Sigmoid colon (tissue), 7 donors: ENCODE measurements at regions of chr14 and their contacts with region 1.

Region 1: DNA sequence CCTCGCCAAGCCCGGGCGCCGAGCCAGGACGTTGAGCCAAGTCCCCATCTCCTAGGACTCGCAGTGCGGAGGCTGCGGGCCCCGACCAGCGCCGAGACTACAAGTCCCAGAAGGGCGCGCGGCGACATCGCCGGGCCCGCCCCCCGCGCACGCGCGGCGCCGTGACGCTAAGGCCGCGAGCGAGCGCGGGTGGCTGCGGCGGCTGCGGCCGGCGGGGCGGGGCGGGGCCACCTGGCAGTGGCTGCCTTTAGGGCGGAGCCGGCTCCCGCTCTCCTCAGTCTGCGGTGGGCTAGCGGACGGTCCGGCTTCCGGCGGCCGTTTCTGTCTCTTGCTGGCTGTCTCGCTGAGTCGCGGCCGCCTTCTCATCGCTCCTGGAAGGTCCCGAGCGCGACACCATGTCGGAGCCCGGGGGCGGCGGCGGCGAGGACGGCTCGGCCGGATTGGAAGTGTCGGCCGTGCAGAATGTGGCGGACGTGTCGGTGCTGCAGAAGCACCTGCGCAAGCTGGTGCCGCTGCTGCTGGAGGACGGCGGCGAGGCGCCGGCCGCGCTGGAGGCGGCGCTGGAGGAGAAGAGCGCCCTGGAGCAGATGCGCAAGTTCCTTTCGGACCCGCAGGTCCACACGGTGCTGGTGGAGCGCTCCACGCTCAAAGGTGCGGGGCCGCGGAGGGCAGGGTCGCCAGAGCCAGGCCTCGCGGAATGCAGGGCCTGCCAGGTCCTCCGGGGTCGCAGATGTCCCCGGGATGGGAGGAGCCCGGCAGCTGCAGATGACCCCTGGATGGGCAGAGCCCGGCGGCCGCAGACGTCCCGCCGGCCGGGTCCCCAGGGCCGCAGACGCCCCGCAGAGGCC is at the start of gene DYNC1H1:
- DNase-seq: peak; percentile 99
- H3K4me3 ChIP-seq: peak within 1 kb of the TSS; percentile 89 to 100 (median 92)
- H3K27ac ChIP-seq: peak within 1 kb of the TSS; percentile 88 to 100 (median 96)
- H3K4me1 ChIP-seq: peaks cover 0 to 62% (median 43%) of the 10 kb centered on the region in 4 donors
- H3K27me3 ChIP-seq: no peaks in the 10 kb centered on the region
- CTCF ChIP-seq: no peak
- EP300 ChIP-seq: no peak
- POLR2A ChIP-seq: peak; percentile 95 to 96
- total RNA-seq, gene DYNC1H1: 320 to 592 (median 485) TPM

Region 2: DNA sequence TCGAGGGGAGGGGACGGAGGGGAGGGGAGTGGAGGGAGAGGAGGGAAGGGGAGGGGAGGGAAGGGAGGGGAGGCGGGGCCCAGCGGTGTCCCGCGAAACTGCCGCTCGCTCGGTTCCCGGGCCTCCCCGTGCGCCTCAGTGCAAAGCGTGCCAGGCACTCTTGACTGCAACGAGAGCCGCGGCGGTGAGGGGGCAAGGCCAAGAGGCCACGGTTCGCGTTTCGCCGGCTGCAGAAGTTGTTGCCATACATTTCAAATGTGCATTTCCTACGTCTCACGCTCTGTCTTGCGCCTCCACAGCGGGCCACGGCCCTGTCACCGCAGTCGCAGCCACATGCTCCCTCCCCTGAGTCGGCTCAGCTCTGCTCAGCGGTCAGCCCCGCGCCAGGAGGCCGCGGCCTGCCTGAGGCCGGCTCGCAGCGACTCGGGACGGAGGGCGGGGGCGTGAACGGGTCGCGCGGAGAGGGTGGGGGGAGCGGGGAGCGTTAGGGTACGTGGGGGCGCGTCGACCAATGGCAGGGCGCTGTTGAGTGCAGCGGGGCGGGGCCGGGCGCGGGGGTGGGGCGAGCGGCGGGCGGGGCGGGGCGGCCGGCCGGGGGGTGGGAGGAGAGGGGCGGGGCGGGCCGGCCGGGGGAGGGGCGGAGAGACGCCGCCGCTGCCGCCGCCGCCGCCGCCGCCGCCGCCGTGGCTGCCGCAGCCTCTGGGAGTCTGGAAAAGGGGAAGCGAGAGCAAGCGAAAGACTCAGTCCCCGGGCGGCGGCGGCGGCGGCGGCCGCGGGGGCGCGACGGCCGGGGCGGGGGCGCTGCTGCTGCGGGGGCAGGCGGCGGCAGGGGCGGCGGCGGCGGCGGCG is 203.3 kb before region 1 on chr14 and contains the start of gene PPP2R5C:
- intact Hi-C with region 1: loop called (anchors 2 kb)
- DNase-seq: peak; percentile 97
- H3K4me3 ChIP-seq: peak within 1 kb of the TSS; percentile 65 to 98 (median 82)
- H3K27ac ChIP-seq: peak within 1 kb of the TSS; percentile 89 to 98 (median 95)
- H3K4me1 ChIP-seq: peaks cover 0 to 22% (median 19%) of the 10 kb centered on the region in 4 donors
- H3K27me3 ChIP-seq: no peaks in the 10 kb centered on the region
- CTCF ChIP-seq: no peak
- EP300 ChIP-seq: no peak
- POLR2A ChIP-seq: peak; percentile 72 to 91
- total RNA-seq, gene PPP2R5C: 115 to 175 (median 147) TPM

Region 3: GRCh38 chr14:101947906-101948665 is 16.4 kb before region 1 on chr14:
- intact Hi-C with region 1: loop called (anchors 1 kb)
- DNase-seq: peak; percentile 100
- H3K4me3 ChIP-seq: peak overlapping the region; percentile 63 to 88 (median 82)
- H3K27ac ChIP-seq: peak overlapping the region; percentile 94 to 99 (median 97)
- H3K4me1 ChIP-seq: peaks cover 0 to 24% (median 16%) of the 10 kb centered on the region in 4 donors
- H3K27me3 ChIP-seq: no peaks in the 10 kb centered on the region
- CTCF ChIP-seq: no peak
- EP300 ChIP-seq: peak in 2 of 4 donors; percentile 84 to 94
- POLR2A ChIP-seq: peak; percentile 95 to 96

Region 4: DNA sequence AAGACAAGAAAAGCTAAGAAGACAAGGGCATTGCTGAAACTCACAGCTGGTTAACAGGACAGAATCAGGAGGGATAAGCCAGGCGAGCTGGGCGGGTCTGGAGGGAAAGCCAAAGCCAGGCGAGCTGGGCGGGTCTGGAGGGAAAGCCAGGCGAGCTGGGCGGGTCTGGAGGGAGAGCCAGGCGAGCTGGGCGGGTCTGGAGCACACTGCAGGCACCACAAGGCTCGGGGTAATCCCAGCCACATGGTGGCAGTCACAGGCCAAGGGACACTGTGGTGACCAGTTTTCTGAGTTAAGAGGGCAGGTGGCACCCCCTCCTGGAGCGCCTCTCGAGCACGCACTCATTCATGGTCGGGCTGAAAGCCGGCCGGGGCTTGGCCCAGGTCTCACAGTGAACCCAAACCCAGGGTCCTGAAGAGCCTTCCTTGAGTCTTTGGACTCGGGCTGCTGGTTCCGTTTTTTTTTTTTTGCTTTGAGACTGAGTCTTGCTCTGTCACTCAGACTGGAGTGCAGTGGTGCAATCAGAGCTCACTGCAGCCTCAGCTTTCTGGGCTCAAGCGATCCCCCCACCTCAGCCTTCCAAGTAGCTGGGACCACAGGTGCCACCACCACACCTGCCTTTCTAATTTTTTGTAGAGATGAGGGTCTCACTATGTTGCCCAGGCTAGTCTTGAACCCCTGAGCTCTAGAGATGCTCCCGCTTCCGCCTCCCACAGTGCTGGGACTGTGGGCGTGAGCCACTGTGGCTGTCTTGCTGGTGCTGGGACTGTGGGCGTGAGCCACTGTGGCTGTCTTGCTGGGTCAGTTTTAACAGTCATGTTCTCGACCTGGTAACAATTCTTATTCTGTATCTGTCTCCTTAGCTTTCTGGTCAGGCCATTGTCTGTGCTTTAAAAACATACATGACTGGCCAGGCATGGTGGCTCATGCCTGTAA is 82.1 kb after region 1 on chr14:
- intact Hi-C with region 1: loop called (anchors 5 kb)
- DNase-seq: peak; percentile 93
- H3K4me3 ChIP-seq: no peak overlapping the region
- H3K27ac ChIP-seq: peak overlapping the region; percentile 28 to 67 (median 39)
- H3K4me1 ChIP-seq: peaks cover 0 to 23% (median 11%) of the 10 kb centered on the region in 4 donors
- H3K27me3 ChIP-seq: no peaks in the 10 kb centered on the region
- CTCF ChIP-seq: peak in 3 of 4 experiments; percentile 35 to 50 (median 39)
- EP300 ChIP-seq: no peak
- POLR2A ChIP-seq: no peak

Region 5: DNA sequence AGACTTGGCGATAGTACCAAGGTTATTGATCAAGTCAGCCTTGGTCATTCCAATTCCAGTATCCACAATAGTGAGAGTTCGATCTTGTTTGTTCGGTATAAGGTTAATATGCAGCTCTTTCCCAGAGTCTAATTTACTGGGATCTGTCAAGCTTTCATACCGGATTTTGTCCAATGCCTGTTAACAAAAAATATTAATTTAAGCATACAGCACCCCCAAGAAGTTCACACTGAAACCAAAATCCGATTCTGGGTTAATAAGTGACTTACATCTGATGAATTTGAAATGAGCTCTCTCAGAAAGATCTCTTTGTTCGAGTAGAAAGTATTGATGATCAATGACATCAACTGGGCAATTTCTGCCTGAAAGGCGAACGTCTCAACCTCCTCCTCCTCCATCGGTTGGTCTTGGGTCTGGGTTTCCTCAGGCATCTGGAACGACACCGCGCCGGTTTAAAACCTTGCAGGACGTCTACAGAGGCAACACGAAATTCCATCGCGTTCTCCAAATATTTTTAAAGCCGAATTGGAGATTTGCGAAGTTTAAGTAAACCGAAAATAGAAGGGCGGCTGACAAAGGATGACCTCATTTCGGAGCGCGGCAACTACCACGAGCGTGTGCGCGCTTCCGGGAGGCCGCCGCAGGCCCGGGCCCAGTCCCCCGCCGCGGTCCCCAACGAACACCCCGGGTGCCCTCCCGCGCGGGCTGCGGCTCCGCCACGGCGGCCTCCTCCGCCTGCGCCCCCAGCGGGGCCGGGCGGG is 121.6 kb after region 1 on chr14:
- intact Hi-C with region 1: no loop called
- DNase-seq: peak; percentile 77
- H3K4me3 ChIP-seq: peak overlapping the region; percentile 91 to 99 (median 94)
- H3K27ac ChIP-seq: peak overlapping the region; percentile 99 to 100 (median 100)
- H3K4me1 ChIP-seq: peaks cover 2 to 56% (median 51%) of the 10 kb centered on the region in 4 donors
- H3K27me3 ChIP-seq: no peaks in the 10 kb centered on the region
- CTCF ChIP-seq: no peak
- EP300 ChIP-seq: no peak
- POLR2A ChIP-seq: no peak